OCI-LY7 (cell line): ENCODE measurements at regions of chr22 and their contacts with region 1.

Region 1: GRCh38 chr22:30289134-30289979 is at the start of gene CASTOR1:
- DNase-seq: peak; percentile 83
- H3K4me3 ChIP-seq: peak within 1 kb of the TSS; percentile 71
- H3K27ac ChIP-seq: peak within 1 kb of the TSS; percentile 64
- H3K4me1 ChIP-seq: peaks cover 31% of the 10 kb centered on the region
- CTCF ChIP-seq: no peak
- total RNA-seq, gene CASTOR1: 3.5 and 9.1 TPM in 2 replicates

Region 2: DNA sequence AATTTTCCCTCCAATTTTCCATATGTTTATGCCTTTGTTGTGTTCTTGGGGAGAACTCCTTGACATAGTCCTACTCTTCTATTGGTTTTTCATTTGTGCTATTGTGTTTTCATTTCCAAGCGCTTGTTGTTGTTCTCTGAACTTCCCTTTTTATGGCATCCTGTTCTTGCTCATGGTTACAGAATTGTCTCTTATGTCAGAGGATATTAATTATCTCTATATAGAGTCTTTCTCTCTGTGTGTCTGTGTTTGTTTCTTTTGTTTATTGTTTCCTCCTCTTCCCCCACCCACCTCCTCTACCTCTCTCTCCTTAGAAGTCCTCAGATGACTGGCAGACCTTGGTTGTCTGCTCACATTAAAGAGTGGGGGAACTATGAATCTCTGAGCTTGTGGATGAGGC is 139.1 kb before region 1 on chr22:
- CTCF ChIA-PET with region 1: no interaction called
- POLR2A ChIA-PET with region 1: no interaction called
- intact Hi-C with region 1: no loop called
- DNase-seq: no peak
- H3K4me3 ChIP-seq: no peak overlapping the region
- H3K27ac ChIP-seq: no peak overlapping the region
- H3K4me1 ChIP-seq: no peaks in the 10 kb centered on the region
- CTCF ChIP-seq: no peak

Region 3: GRCh38 chr22:30253205-30253852 is 36.0 kb before region 1 on chr22:
- CTCF ChIA-PET with region 1: no interaction called
- POLR2A ChIA-PET with region 1: no interaction called
- intact Hi-C with region 1: loop called (anchors 1 kb)
- DNase-seq: no peak
- H3K4me3 ChIP-seq: no peak overlapping the region
- H3K27ac ChIP-seq: no peak overlapping the region
- H3K4me1 ChIP-seq: no peaks in the 10 kb centered on the region
- CTCF ChIP-seq: no peak

Region 4: GRCh38 chr22:30305519-30305905 is 16.2 kb after region 1 on chr22:
- CTCF ChIA-PET with region 1: interaction called, 9 read pairs
- POLR2A ChIA-PET with region 1: interaction called, 14 read pairs
- intact Hi-C with region 1: loop called (anchors 1 kb)
- DNase-seq: peak; percentile 90
- H3K4me3 ChIP-seq: peak overlapping the region; percentile 61
- H3K27ac ChIP-seq: peak overlapping the region; percentile 94
- H3K4me1 ChIP-seq: peaks cover 96% of the 10 kb centered on the region
- CTCF ChIP-seq: no peak

Region 5: GRCh38 chr22:30340911-30341685 is 51.7 kb after region 1 on chr22:
- CTCF ChIA-PET with region 1: no interaction called
- POLR2A ChIA-PET with region 1: no interaction called
- intact Hi-C with region 1: no loop called
- DNase-seq: no peak
- H3K4me3 ChIP-seq: no peak overlapping the region
- H3K27ac ChIP-seq: no peak overlapping the region
- H3K4me1 ChIP-seq: no peaks in the 10 kb centered on the region
- CTCF ChIP-seq: no peak

Region 6: DNA sequence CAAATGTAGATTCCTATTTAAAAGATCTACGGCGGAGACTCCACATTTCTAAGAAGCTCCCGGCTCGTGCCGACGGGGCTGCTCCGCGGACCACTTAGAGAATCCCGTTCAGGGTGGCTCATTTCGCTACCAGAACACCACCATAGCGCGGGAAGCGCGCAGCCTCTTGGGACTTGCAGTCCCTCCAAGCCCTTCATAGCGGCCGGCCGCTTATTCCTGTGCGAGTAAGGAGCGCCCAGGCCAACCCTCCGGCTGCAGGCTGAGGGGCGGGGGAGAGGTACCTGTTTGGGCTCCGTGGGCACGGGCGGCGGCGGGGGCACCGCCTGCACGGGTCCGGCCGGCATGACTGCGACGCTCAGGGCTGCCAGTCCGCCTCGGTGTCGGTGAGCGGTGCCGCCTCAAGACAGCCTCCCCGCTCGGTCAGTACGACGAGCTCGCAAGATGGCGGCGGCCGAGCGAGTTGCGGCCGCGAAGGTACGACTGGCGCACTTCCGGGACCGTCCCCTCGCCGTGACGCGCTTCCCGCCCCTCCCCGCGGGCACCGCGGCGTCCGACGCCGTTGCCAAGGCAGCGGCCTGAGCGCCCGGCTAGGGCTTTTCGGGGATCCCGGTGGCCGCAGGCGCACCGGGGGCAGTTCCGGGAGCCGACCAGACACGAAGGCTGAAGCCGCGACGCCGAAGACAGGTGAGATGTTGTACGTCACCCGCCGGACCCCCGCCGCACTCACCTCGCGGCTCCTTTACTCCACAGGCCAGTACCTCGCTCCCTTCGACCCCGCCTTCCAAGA is 67.3 kb after region 1 on chr22 and contains the starts of genes CCDC157 and SF3A1:
- CTCF ChIA-PET with region 1: interaction called, 3 read pairs
- POLR2A ChIA-PET with region 1: no interaction called
- intact Hi-C with region 1: loop called (anchors 1 kb)
- DNase-seq: peak; percentile 93
- H3K4me3 ChIP-seq: peak within 1 kb of the TSS; percentile 89
- H3K27ac ChIP-seq: peak within 1 kb of the TSS; percentile 62
- H3K4me1 ChIP-seq: peaks cover 23% of the 10 kb centered on the region
- CTCF ChIP-seq: no peak
- total RNA-seq, gene CCDC157: 3.4 and 4.7 TPM in 2 replicates
- total RNA-seq, gene SF3A1: 44.9 and 71.8 TPM in 2 replicates

Region 7: GRCh38 chr22:30485362-30485988 is 196.1 kb after region 1 on chr22:
- CTCF ChIA-PET with region 1: no interaction called
- POLR2A ChIA-PET with region 1: no interaction called
- intact Hi-C with region 1: loop called (anchors 10 kb)
- DNase-seq: peak; percentile 59
- H3K4me3 ChIP-seq: no peak overlapping the region
- H3K27ac ChIP-seq: no peak overlapping the region
- H3K4me1 ChIP-seq: no peaks in the 10 kb centered on the region
- CTCF ChIP-seq: peak; percentile 89